Activated CD4-positive, alpha-beta T cell treated with anti-CD3 and anti-CD28 coated beads, Interleukin-2, amount 10 ng/mL, durations not matched to agents 24 days and 14 days (primary cell): ENCODE measurements at regions of chr17 and their contacts with region 1.

Region 1: GRCh38 chr17:77772461-77772897 is 186.0 kb upstream of the TNRC6C start:
- DNase-seq: peak; percentile 89
- H3K4me3 Mint-ChIP-seq: no peak overlapping the region
- H3K27ac Mint-ChIP-seq: no peak overlapping the region
- H3K4me1 Mint-ChIP-seq: peaks cover 9% of the 10 kb centered on the region
- H3K27me3 Mint-ChIP-seq: peaks cover 12% of the 10 kb centered on the region

Region 2: GRCh38 chr17:78013683-78014467 is 241.4 kb after region 1 on chr17:
- intact Hi-C with region 1: loop called (anchors 1 kb)
- DNase-seq: peak; percentile 85
- H3K4me3 Mint-ChIP-seq: no peak overlapping the region
- H3K27ac Mint-ChIP-seq: no peak overlapping the region
- H3K4me1 Mint-ChIP-seq: peaks cover 8% of the 10 kb centered on the region
- H3K27me3 Mint-ChIP-seq: no peaks in the 10 kb centered on the region